ENCODE measurements at regions of chr4 and their contacts with region 1.

Region 1: GRCh38 chr4:171846232-171846631 is 33.0 kb downstream of the GALNTL6 start:
- DNase-seq: peak; percentile 30
- CTCF ChIP-seq: peak; percentile 83

Region 2: GRCh38 chr4:172207258-172207657 is 361.0 kb after region 1 on chr4:
- in situ Hi-C with region 1: no loop called
- DNase-seq: no peak
- CTCF ChIP-seq: no peak

Region 3: DNA sequence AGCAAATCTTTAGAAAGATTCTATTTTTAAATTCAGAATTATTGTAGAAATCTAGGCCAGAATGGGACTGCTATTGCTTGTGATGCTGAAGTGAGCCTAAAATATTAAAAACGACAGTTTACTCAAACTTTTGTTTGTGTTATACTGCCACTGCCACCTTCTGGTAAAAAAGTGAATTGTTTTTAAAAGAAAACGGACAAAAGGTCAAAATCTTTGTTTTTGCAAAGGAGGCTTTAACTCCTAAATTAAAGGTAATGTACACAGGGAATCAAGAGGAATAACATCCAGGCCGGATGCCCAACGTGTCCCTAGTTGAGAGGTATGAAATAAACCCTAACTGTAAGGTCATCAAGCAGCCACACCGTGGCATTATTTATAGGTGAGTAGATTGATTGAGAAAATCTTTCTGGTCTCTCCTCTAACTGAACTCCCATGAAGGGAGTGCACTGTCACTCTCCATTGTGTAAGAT is 984.1 kb after region 1 on chr4:
- in situ Hi-C with region 1: loop called (anchors 25 kb)
- DNase-seq: peak; percentile 27
- CTCF ChIP-seq: peak; percentile 40